PC-3 (cell line): ENCODE measurements at regions of chr4 and their contacts with region 1.

Region 1: GRCh38 chr4:43132010-43132582 is 239.6 kb downstream of the GRXCR1 start:
- DNase-seq: peak; percentile 81
- ATAC-seq: peak; percentile 57
- H3K4me3 ChIP-seq: peak overlapping the region; percentile 52
- H3K27ac ChIP-seq: no peak overlapping the region
- H3K4me1 ChIP-seq: peaks cover 20% of the 10 kb centered on the region
- H3K27me3 ChIP-seq: no peaks in the 10 kb centered on the region
- CTCF ChIP-seq: peak; percentile 85

Region 2: DNA sequence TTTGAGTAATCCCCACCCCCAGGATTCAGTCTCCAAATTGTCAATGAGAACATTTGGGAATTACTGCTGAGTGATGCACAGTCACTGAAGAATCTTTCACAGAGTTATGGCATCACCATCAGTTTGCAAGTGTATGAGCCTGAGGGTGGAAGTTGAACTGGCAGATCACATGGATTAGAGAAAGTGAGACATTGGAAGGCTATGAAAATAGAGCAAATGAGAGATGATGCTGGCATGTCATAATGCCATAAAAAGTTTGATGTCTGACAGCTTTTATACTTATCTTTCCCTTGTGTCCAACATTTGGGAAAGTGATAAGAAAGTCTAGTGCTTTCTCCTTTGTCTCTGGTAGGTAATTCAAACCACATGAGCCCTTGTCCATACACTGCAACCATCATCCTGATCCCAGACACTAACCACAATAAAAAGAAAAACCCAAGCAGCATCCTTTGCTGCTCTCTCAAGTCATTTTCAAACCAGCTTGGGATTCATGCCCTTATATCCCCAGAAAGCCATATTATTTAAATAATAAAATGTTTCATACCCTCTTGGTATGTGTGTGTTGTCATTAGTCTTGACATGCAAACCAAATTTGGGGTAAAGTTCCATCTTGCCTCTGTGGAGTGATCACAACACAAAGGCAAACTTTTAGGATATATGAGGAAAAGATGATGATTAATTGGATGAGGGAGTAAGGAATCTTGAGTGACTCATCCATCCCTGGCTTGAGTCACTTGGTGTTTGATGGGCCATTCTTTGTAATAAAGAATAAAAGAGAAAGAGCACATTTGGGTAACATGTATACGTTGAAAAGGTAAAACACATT is 199.3 kb after region 1 on chr4:
- CTCF ChIA-PET with region 1: no interaction called
- POLR2A ChIA-PET with region 1: no interaction called
- intact Hi-C with region 1: loop called (anchors 5 kb)
- DNase-seq: peak; percentile 89
- ATAC-seq: peak; percentile 68
- H3K4me3 ChIP-seq: peak overlapping the region; percentile 30; the same call in 1 of the 2 replicates
- H3K27ac ChIP-seq: peak overlapping the region; percentile 98
- H3K4me1 ChIP-seq: peaks cover 38% of the 10 kb centered on the region
- H3K27me3 ChIP-seq: no peaks in the 10 kb centered on the region
- CTCF ChIP-seq: no peak

Region 3: GRCh38 chr4:43456383-43456782 is 324.3 kb after region 1 on chr4:
- CTCF ChIA-PET with region 1: no interaction called
- POLR2A ChIA-PET with region 1: no interaction called
- intact Hi-C with region 1: loop called (anchors 2 kb)
- DNase-seq: peak; percentile 91
- ATAC-seq: peak; percentile 57
- H3K4me3 ChIP-seq: peak overlapping the region; percentile 13; the same call in 1 of the 2 replicates
- H3K27ac ChIP-seq: peak overlapping the region; percentile 87
- H3K4me1 ChIP-seq: peaks cover 35% of the 10 kb centered on the region
- H3K27me3 ChIP-seq: no peaks in the 10 kb centered on the region
- CTCF ChIP-seq: no peak

Region 4: DNA sequence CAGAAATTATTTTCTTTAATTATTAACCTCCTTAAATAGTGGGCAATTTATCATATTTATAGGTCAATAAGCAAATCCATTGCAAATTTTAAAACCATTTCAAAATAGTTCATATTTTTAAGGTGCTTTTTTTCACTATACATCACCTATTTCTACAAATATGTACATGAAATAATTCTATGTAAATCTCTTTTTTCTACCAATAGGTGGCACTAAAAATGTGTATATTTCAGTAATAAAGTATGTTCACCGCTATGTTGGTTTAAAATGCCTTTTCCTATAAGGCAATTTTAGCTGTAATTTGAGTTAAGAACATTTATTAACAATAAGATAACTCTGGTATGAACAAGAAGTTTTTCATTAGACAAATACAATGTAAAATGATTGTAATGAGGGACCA is 644.3 kb after region 1 on chr4:
- CTCF ChIA-PET with region 1: no interaction called
- POLR2A ChIA-PET with region 1: no interaction called
- intact Hi-C with region 1: loop called (anchors 2 kb)
- DNase-seq: peak; percentile 52
- ATAC-seq: no peak
- H3K4me3 ChIP-seq: no peak overlapping the region
- H3K27ac ChIP-seq: no peak overlapping the region
- H3K4me1 ChIP-seq: no peaks in the 10 kb centered on the region
- H3K27me3 ChIP-seq: no peaks in the 10 kb centered on the region
- CTCF ChIP-seq: peak; percentile 59

Region 5: DNA sequence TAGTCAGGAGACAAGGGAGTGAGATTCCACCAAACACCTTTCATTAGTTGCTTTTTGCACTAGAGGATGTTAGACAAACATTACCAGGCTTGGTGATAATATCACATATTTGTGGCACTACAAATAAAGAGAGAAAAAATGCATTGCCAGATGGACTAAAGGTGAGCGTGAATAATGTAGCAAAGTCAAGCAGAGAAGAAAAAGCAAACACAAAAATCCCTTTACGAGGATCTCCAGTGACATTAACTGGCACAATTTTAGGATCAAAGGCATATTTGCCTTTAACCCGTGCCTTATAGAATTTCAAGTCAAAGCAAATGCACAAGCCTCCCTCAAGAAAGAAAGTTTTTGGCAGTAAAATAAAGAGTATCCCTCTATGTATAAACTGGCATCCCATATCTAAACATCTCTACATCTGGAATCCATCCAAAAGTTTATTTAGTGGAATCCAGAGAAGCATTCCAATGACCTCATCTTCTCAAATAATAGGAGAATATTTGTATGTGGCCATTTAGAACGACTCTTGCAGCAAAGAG is 1025.7 kb after region 1 on chr4:
- CTCF ChIA-PET with region 1: no interaction called
- POLR2A ChIA-PET with region 1: no interaction called
- intact Hi-C with region 1: loop called (anchors 5 kb)
- DNase-seq: peak; percentile 84
- ATAC-seq: peak; percentile 80
- H3K4me3 ChIP-seq: no peak overlapping the region
- H3K27ac ChIP-seq: no peak overlapping the region
- H3K4me1 ChIP-seq: peaks cover 26% of the 10 kb centered on the region
- H3K27me3 ChIP-seq: no peaks in the 10 kb centered on the region
- CTCF ChIP-seq: no peak

Region 6: DNA sequence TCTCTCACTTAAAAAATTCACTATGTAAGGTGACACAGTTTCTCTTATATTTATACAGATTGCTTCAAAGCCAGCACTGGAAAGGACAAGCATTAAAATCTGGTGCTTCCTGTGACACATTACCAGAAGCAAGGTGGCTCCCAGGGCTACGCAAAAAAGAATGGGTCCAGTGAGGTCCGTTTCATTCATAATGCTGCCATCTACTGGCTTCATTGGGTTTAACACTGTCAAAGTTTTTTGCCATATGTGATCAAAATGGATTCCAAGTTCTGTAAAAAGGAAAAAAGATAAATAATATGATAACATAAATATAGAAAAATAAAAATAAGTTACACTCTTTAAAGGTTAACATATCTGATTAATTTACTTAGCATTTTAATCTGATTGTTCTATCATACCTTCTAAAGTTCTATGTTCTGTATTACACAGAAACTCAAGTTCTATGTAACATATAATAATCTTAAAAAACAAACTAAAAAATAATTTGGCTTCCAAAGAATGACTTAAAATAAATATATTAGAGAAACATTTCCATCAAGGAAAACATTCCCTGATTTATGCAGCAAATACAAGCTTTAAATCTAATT is 1497.3 kb after region 1 on chr4:
- CTCF ChIA-PET with region 1: no interaction called
- POLR2A ChIA-PET with region 1: no interaction called
- intact Hi-C with region 1: loop called (anchors 5 kb)
- DNase-seq: peak; percentile 81
- ATAC-seq: peak; percentile 77
- H3K4me3 ChIP-seq: no peak overlapping the region
- H3K27ac ChIP-seq: no peak overlapping the region
- H3K4me1 ChIP-seq: no peaks in the 10 kb centered on the region
- H3K27me3 ChIP-seq: no peaks in the 10 kb centered on the region
- CTCF ChIP-seq: peak; percentile 62